ENCODE measurements at regions of chr22 and their contacts with region 1.

Region 1: GRCh38 chr22:24186953-24187677 is 5.8 kb downstream of the SUSD2 start:
- DNase-seq: peak in 1 of 2 donors; percentile 68
- H3K4me3 ChIP-seq: no peak overlapping the region
- H3K27ac ChIP-seq: no peak overlapping the region
- H3K4me1 ChIP-seq: peaks cover 0 to 71% (median 52%) of the 10 kb centered on the region in 4 donors
- H3K27me3 ChIP-seq: no peaks in the 10 kb centered on the region
- CTCF ChIP-seq: no peak

Region 2: DNA sequence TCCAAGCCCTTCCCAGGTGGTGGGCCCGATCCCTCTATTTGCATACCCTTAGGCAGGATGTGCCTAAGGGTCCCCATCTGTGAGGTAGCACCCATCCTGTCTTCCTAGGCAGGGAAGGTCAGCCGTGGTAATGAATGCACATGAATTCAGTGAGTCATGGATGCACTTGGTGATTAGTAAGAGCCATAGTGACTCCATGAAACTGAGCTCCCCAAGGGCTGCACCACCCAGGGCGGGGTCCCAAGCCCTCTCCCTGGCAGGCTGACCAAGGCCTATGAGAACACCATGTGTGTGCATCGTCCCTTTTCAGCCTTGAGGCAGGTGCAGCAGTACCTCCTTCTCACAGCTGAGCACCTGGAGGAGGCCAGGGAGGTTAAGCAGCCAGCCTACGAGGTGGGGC is 21.4 kb before region 1 on chr22:
- intact Hi-C with region 1: no loop called
- DNase-seq: no peak
- H3K4me3 ChIP-seq: no peak overlapping the region
- H3K27ac ChIP-seq: peak overlapping the region; percentile 45 to 89
- H3K4me1 ChIP-seq: peaks cover 0 to 48% (median 28%) of the 10 kb centered on the region in 4 donors
- H3K27me3 ChIP-seq: no peaks in the 10 kb centered on the region
- CTCF ChIP-seq: no peak

Region 3: GRCh38 chr22:24247011-24247507 is 59.9 kb after region 1 on chr22:
- intact Hi-C with region 1: loop called (anchors 1 kb)
- DNase-seq: no peak
- H3K4me3 ChIP-seq: no peak overlapping the region
- H3K27ac ChIP-seq: peak overlapping the region; percentile 90 to 92
- H3K4me1 ChIP-seq: peaks cover 0 to 59% (median 46%) of the 10 kb centered on the region in 4 donors
- H3K27me3 ChIP-seq: no peaks in the 10 kb centered on the region
- CTCF ChIP-seq: no peak

Measured in tibial artery (tissue), 4 donors.